Activated T-helper 2 cell treated with anti-CD3 and anti-CD28 coated beads, Interferon-gamma antibody, Interleukin-2, Interleukin-4, amounts not matched to agents 10 μg/mL and 5 μg/mL and 100 μg/mL, durations not matched to agents 14 hours and 24 hours and 36 hours (primary cell): ENCODE measurements at regions of chr17 and their contacts with region 1.

Region 1: DNA sequence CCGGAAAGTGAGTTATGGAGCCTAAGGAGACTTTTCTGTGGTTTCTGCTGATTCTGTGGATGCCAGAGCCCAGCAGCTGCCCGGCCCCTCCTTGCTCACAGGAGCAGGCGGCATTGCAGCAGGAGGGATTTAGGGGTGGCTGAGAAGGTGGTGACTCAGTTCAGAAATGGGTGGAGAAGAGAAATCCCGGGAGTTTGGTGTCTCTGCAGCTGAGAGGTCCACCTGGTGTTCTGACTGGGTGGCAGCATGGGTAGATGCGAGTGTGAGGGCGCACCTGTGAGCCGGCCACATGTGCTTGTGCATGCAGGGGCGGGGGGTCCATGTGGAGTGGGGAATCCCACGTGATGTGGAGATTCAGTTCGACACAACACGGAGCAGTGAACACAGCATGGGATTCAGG is 16.1 kb upstream of the SPPL2C start:
- DNase-seq: no peak
- H3K4me3 Mint-ChIP-seq: no peak overlapping the region
- H3K27ac Mint-ChIP-seq: no peak overlapping the region
- H3K4me1 Mint-ChIP-seq: no peaks in the 10 kb centered on the region
- H3K27me3 Mint-ChIP-seq: no peaks in the 10 kb centered on the region

Region 2: GRCh38 chr17:45640141-45640850 is 188.3 kb before region 1 on chr17:
- intact Hi-C with region 1: loop called (anchors 1 kb)
- DNase-seq: peak; percentile 62
- H3K4me3 Mint-ChIP-seq: no peak overlapping the region
- H3K27ac Mint-ChIP-seq: no peak overlapping the region
- H3K4me1 Mint-ChIP-seq: peaks cover 8% of the 10 kb centered on the region
- H3K27me3 Mint-ChIP-seq: no peaks in the 10 kb centered on the region

Region 3: GRCh38 chr17:45782889-45783592 is 45.6 kb before region 1 on chr17:
- intact Hi-C with region 1: loop called (anchors 1 kb)
- DNase-seq: no peak
- H3K4me3 Mint-ChIP-seq: peak overlapping the region; percentile 69
- H3K27ac Mint-ChIP-seq: no peak overlapping the region
- H3K4me1 Mint-ChIP-seq: peaks cover 4% of the 10 kb centered on the region
- H3K27me3 Mint-ChIP-seq: peaks cover 64% of the 10 kb centered on the region

Region 4: GRCh38 chr17:45923511-45924268 is 95.1 kb after region 1 on chr17:
- intact Hi-C with region 1: no loop called
- DNase-seq: no peak
- H3K4me3 Mint-ChIP-seq: no peak overlapping the region
- H3K27ac Mint-ChIP-seq: no peak overlapping the region
- H3K4me1 Mint-ChIP-seq: no peaks in the 10 kb centered on the region
- H3K27me3 Mint-ChIP-seq: peaks cover 6% of the 10 kb centered on the region